ENCODE measurements at regions of chr22 and their contacts with region 1.

Region 1: GRCh38 chr22:39170825-39171622 is 18.5 kb upstream of the CBX7 start:
- DNase-seq: peak; percentile 90
- ATAC-seq: peak; percentile 86

Region 2: DNA sequence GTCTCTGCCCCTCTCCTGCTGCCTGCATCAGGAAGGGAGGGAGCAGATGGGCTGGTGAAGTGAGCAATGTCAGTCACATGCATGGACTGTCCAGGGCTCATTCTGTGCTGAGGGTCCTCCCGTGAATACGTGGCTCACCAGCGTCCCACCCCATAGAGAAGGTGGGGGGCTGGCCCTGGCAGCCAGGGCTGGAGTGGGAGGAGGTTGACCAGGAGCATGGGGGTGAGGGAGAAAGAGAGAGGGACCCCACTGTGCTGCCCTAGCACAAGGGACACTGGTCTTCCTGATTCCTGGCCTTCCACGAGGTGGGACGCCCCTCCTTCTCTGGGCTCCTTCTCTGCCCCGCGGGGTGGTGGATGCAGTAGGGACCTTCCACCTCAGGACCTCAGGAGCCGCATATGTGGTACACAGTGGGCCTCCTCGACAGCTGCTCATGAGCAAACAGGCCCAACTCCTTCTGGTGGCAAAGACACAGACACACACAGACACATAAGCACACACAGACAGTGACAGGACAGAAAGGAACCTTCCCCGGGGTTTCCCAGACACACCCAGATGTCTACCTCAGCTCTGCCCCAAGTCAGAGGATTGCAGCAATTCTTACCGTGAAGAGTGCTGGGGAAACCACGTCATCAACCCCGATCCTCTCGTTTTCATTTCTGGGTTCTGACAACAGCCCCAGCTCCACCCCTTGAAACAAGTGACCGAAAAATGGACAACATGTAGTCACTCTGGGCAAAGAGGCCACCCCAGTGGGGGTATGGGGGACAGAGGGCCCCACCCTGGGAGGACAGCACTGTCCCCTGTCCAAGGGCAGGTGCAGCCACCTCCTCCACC is 217.2 kb before region 1 on chr22:
- intact Hi-C with region 1: no loop called
- DNase-seq: no peak
- ATAC-seq: peak; percentile 24

Region 3: GRCh38 chr22:39236321-39237317 is 65.6 kb after region 1 on chr22:
- intact Hi-C with region 1: loop called (anchors 2 kb)
- DNase-seq: peak; percentile 72
- ATAC-seq: peak; percentile 62

Region 4: GRCh38 chr22:39309881-39310714 is 139.1 kb after region 1 on chr22:
- intact Hi-C with region 1: loop called (anchors 2 kb)
- DNase-seq: no peak
- ATAC-seq: no peak

Region 5: DNA sequence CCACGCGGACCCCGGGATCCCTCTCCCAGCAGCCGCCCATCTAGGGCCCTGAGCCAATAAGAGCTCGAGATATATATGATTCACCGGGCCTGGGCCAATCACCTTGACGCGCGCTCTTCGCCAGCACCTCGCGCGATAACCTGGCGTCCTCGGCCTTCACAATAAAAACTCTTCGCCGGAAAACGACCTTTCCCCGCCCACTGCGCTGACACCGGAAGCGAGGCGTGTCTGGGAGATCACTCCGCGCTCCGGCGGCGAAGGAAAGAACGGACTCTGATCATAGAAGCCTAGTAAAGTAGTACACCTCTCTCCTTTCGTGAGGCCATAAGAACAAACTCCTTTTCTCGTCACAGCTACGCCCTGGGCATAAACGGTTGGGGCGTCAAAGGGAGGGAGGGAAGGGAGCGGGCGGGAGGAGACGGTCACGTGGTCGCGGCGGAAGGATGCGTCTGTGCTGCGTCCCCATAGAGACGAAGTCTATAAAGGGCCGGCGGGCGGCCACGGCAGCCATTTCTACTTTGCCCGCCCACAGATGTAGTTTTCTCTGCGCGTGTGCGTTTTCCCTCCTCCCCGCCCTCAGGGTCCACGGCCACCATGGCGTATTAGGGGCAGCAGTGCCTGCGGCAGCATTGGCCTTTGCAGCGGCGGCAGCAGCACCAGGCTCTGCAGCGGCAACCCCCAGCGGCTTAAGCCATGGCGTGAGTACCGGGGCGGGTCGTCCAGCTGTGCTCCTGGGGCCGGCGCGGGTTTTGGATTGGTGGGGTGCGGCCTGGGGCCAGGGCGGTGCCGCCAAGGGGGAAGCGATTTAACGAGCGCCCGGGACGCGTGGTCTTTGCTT is 349.2 kb after region 1 on chr22 and contains the start of gene ATF4:
- intact Hi-C with region 1: loop called (anchors 10 kb)
- DNase-seq: peak; percentile 98
- ATAC-seq: peak; percentile 92
- total RNA-seq, gene ATF4: 200 TPM

Measured in Right ventricle myocardium superior (tissue), 1 donor.